ENCODE measurements at regions of chr2 and their contacts with region 1.

Region 1: GRCh38 chr2:118013724-118014491 is at the start of gene CCDC93:
- DNase-seq: peak; percentile 85 to 94 (median 91)
- H3K4me3 ChIP-seq: peak within 1 kb of the TSS; percentile 57 to 95
- H3K4me3 Mint-ChIP-seq: peak within 1 kb of the TSS; percentile 94 to 98 (median 96)
- H3K27ac ChIP-seq: peak within 1 kb of the TSS; percentile 98
- H3K27ac Mint-ChIP-seq: peak within 1 kb of the TSS; percentile 90 to 97 (median 95)
- H3K4me1 ChIP-seq: peaks cover 35% of the 10 kb centered on the region
- H3K4me1 Mint-ChIP-seq: peaks cover 26 to 47% (median 34%) of the 10 kb centered on the region in 4 donors
- H3K27me3 ChIP-seq: no peaks in the 10 kb centered on the region
- H3K27me3 Mint-ChIP-seq: no peaks in the 10 kb centered on the region
- total RNA-seq, gene CCDC93: 73.1 to 73.3 TPM

Region 2: GRCh38 chr2:118032169-118033013 is 18.5 kb after region 1 on chr2:
- CTCF ChIA-PET with region 1: interaction called, 10 read pairs
- POLR2A ChIA-PET with region 1: no interaction called
- intact Hi-C with region 1: no loop called
- DNase-seq: peak in 3 of 5 donors; percentile 27 to 32 (median 29)
- H3K4me3 ChIP-seq: no peak overlapping the region
- H3K4me3 Mint-ChIP-seq: no peak overlapping the region
- H3K27ac ChIP-seq: no peak overlapping the region
- H3K27ac Mint-ChIP-seq: peak overlapping the region in 1 of 7 donors; percentile 5
- H3K4me1 ChIP-seq: no peaks in the 10 kb centered on the region
- H3K4me1 Mint-ChIP-seq: no peaks in the 10 kb centered on the region
- H3K27me3 ChIP-seq: peaks cover 9% of the 10 kb centered on the region
- H3K27me3 Mint-ChIP-seq: peaks cover 26 to 31% of the 10 kb centered on the region in 2 donors

Region 3: GRCh38 chr2:118061135-118061955 is 47.4 kb after region 1 on chr2:
- CTCF ChIA-PET with region 1: no interaction called
- POLR2A ChIA-PET with region 1: no interaction called
- intact Hi-C with region 1: no loop called
- DNase-seq: no peak
- H3K4me3 ChIP-seq: no peak overlapping the region
- H3K4me3 Mint-ChIP-seq: no peak overlapping the region
- H3K27ac ChIP-seq: no peak overlapping the region
- H3K27ac Mint-ChIP-seq: peak overlapping the region in 2 of 7 donors; percentile 44 to 54
- H3K4me1 ChIP-seq: peaks cover 7% of the 10 kb centered on the region
- H3K4me1 Mint-ChIP-seq: peaks cover 1 to 8% (median 6%) of the 10 kb centered on the region in 4 donors
- H3K27me3 ChIP-seq: peaks cover 3% of the 10 kb centered on the region
- H3K27me3 Mint-ChIP-seq: peaks cover 10 to 20% of the 10 kb centered on the region in 2 donors

Region 4: DNA sequence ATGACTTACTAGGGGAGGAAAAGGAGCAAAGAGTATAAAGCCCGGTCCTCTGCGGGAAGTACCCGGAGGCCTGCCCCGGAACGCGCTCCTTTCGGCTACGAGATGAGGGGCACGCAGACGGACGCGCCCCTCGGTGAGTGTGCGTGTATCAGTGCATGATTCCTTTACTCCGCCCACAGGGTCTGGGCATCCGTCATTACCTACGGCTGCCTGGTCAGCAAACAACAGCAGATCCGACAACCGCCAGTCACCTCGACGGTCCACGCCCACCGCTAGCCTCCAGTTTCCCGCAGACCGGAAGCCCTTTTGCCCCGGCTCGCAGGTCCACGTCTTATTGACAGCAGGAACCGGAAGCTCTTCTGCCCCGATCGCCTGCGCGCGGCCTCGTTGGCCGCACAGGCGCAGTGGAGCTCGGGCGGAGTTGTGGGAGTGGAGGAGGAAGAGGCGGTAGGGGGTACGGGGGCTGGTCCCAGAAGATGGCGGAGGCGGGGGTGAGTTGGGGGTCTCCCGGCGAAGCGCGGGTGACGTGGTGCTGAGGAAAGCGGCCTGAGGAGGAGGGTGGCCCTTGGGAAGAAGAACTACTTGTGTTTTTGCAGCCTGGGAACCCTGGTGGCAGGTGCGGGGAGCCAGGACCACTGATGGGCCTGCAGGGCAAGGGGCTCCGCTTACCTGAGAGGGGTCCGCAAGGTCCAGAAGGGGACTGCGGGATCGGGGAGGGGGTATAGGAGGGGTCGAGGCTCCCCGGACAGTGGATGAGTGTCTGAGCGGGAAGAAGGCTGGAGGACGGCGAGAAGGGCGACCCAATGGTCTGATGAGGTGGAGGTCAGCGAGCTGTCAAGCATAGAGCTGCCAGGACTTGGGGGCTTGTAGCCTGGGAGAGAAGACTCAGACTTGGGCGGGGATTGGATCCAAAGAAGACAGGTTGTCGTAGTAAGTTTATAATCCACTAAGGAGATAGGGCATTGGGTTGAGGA is 74.4 kb after region 1 on chr2 and contains the start of gene INSIG2:
- CTCF ChIA-PET with region 1: interaction called, 4 read pairs
- POLR2A ChIA-PET with region 1: interaction called, 6 read pairs
- intact Hi-C with region 1: loop called (anchors 1 kb)
- DNase-seq: peak; percentile 82 to 88 (median 83)
- H3K4me3 ChIP-seq: peak within 1 kb of the TSS; percentile 87 to 94
- H3K4me3 Mint-ChIP-seq: peak within 1 kb of the TSS; percentile 90 to 96 (median 93)
- H3K27ac ChIP-seq: peak within 1 kb of the TSS; percentile 66
- H3K27ac Mint-ChIP-seq: peak within 1 kb of the TSS; percentile 70 to 94 (median 94)
- H3K4me1 ChIP-seq: peaks cover 38% of the 10 kb centered on the region
- H3K4me1 Mint-ChIP-seq: peaks cover 14 to 23% (median 18%) of the 10 kb centered on the region in 4 donors
- H3K27me3 ChIP-seq: no peaks in the 10 kb centered on the region
- H3K27me3 Mint-ChIP-seq: peaks cover 0 to 3% of the 10 kb centered on the region in 2 donors
- total RNA-seq, gene INSIG2: 18.0 to 19.7 TPM

Region 5: DNA sequence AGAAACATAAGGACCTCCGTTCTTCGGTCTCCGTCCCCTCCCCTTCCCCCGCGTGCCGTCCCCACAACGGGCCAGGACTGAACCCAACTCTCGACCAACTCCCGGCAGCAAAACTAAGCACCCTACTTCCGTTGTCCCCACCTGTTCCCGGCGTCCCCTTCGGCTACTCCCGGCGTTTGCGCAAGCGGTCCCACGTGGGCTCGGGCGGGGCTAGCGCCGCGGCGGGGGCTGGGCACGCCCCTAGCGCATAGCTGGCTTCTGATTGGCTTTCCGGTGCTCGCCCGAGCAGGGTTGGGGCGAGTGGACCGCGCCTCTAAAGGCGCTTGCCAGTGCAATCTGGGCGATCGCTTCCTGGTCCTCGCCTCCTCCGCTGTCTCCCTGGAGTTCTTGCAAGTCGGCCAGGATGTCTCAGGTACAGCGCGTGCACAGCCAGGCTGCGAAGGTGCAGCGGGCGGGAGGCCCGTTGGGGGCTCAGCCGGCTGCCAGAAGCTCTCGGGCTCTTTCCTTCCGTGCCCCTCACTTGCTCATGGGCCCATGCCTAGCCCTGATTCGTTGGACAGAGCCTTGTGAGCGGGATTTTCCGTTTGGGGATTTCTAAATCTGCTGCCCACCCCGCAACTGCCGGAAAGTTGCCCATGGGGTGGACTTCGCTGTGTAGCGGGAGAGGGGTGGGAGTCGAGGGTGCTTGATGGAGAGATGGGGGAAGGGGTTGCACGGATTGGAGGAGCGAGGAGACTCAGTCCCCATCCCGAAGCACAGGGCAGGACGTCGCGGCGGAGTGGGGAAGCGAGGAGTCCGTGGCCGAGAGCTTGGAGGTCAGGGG is 1353.0 kb after region 1 on chr2 and contains the starts of genes C2orf76 and DBI:
- CTCF ChIA-PET with region 1: no interaction called
- POLR2A ChIA-PET with region 1: interaction called, 4 read pairs
- intact Hi-C with region 1: loop called (anchors 1 kb)
- DNase-seq: peak; percentile 89 to 90 (median 89)
- H3K4me3 ChIP-seq: peak within 1 kb of the TSS; percentile 95 to 97
- H3K4me3 Mint-ChIP-seq: peak within 1 kb of the TSS; percentile 94 to 99 (median 96)
- H3K27ac ChIP-seq: peak within 1 kb of the TSS; percentile 92
- H3K27ac Mint-ChIP-seq: peak within 1 kb of the TSS; percentile 89 to 98 (median 94)
- H3K4me1 ChIP-seq: peaks cover 31% of the 10 kb centered on the region
- H3K4me1 Mint-ChIP-seq: peaks cover 32 to 52% (median 40%) of the 10 kb centered on the region in 4 donors
- H3K27me3 ChIP-seq: no peaks in the 10 kb centered on the region
- H3K27me3 Mint-ChIP-seq: no peaks in the 10 kb centered on the region
- total RNA-seq, gene C2orf76: 8.8 to 9.6 TPM
- total RNA-seq, gene DBI: 44.7 to 51.5 TPM